Endothelial cell of umbilical vein (primary cell): ENCODE measurements at regions of chr1 and their contacts with region 1.

Region 1: GRCh38 chr1:223123011-223123610 is 19.9 kb downstream of the TLR5 start:
- DNase-seq: peak; percentile 22
- H3K4me3 ChIP-seq: no peak overlapping the region
- H3K27ac ChIP-seq: no peak overlapping the region
- H3K4me1 ChIP-seq: peaks cover 7% of the 10 kb centered on the region
- H3K27me3 ChIP-seq: no peaks in the 10 kb centered on the region
- CTCF ChIP-seq: no peak
- POLR2A ChIP-seq: no peak

Region 2: DNA sequence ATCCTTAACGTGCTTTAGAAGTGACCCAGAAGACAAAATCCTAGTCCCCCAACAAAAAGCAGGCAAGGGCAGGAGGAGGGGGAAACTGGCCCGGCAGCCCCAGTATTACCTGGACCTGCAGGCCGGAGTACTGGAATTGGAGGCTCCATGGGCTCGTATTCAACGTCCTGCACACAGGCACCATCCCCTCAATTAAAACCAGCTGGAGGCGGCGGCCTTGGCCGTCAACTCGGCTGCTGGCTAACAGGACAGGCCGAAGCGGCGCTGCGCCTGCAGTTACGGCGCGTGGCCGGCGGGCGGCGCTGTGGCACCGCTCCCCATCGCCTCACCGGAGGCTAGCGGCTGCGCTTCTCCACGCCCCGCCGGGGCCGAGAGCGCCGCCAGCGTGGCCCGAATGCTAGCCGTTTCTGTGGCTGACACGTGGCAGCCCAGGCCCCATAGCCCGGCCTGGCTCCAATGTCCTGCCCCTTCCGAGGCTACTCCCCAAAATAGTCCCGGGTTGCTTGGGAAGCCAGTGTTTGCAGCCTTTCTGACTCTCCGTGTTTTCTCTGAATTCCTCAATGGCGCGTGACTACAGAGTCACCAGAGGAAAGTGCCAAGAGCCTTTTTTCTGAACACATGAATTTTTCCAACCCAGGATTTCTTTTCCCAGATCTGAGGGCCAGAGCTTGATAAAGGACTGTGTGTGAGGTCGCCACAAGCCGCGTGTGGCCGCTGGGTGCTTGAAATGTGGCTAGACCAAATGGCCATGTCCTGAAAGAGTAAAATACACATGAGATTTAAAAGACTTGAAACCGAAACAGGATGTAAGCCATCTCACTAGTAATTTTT is 657.7 kb before region 1 on chr1:
- CTCF ChIA-PET with region 1: interaction called, 8 read pairs
- POLR2A ChIA-PET with region 1: no interaction called
- dilution Hi-C with region 1: no loop called
- intact Hi-C with region 1: loop called (anchors 5 kb)
- DNase-seq: peak; percentile 97
- H3K4me3 ChIP-seq: peak overlapping the region; percentile 49 to 71 (median 53)
- H3K27ac ChIP-seq: peak overlapping the region; percentile 83
- H3K4me1 ChIP-seq: peaks cover 2% of the 10 kb centered on the region
- H3K27me3 ChIP-seq: peaks cover 6 to 7% of the 10 kb centered on the region in 2 experiments
- CTCF ChIP-seq: peak; percentile 95 to 100
- POLR2A ChIP-seq: peak; percentile 80

Region 3: DNA sequence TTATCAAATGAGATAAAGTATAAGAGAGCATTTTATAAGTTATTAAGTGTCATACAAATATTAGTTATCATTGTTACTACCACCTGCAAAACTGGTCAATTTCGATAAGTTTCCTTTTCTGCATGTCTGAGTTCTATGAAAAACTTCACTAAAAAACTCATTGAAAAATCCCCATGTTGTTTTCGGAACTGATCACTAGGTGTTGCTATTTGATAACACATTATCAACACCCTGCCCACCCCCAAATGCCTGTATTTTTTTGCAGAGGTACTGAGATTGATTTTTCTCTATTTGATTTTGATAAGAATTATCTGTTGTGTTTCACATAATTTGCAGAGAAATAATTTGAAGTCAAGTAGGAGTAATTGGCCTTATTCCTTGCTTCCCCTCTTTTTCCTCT is 330.4 kb before region 1 on chr1:
- CTCF ChIA-PET with region 1: interaction called, 56 read pairs
- POLR2A ChIA-PET with region 1: no interaction called
- dilution Hi-C with region 1: no loop called
- intact Hi-C with region 1: loop called (anchors 1 kb)
- DNase-seq: peak; percentile 44
- H3K4me3 ChIP-seq: no peak overlapping the region
- H3K27ac ChIP-seq: no peak overlapping the region
- H3K4me1 ChIP-seq: peaks cover 10% of the 10 kb centered on the region
- H3K27me3 ChIP-seq: peaks cover 0 to 2% of the 10 kb centered on the region in 2 experiments
- CTCF ChIP-seq: peak; percentile 20 to 29
- POLR2A ChIP-seq: no peak

Region 4: DNA sequence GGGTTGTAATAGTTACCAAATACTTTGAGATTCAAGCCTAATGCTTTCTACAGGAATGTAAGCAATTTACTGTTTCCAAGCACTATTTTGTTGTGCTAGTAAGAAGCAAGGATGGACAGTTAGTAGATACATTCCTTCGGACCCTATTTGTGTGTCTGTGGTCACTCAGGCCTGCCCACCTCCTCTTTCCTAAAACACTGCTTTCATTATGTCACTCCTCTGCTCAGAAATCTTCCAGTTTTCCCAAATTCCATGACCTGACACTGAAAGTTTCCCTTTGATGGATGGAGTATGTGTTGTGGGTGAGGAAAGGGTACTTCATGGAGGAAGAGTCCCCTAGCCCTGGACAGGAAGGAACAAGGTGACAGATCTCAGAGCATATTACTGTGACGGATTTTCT is 167.1 kb before region 1 on chr1:
- CTCF ChIA-PET with region 1: no interaction called
- POLR2A ChIA-PET with region 1: no interaction called
- dilution Hi-C with region 1: no loop called
- intact Hi-C with region 1: no loop called
- DNase-seq: no peak
- H3K4me3 ChIP-seq: no peak overlapping the region
- H3K27ac ChIP-seq: no peak overlapping the region
- H3K4me1 ChIP-seq: no peaks in the 10 kb centered on the region
- H3K27me3 ChIP-seq: no peaks in the 10 kb centered on the region
- CTCF ChIP-seq: no peak
- POLR2A ChIP-seq: no peak

Region 5: DNA sequence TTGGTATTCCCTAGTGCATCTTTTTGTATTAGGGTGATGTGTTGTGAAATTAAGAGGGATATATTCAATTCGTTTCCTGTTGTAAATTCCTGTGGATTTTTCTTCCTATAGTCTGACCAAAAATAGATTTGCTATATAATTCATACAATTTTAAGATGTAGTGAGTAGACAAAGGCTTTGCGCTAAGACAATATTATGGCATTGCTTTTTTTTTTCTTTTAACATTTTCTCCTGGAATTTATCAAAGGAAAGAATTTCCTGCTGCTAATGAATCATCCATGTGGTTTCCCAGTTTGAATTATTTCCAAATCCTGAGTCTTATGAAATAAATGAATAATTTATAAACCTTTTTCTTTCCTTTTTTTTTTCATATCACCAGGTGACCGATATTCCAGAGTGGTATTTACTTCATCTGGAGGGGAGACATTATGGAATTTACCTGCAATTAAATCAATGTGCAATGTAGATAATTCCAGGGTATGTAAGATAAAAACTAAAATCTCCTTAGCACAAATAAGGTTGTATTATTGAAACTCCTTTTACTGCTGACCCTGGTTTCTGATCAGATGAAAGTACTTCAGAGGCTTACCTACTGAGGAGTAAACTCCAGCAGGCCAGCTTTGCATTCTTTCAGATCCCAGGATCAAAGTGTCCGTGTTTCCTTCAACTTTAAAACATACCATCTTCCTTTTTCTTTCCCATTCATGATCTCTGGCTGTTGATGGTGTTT is 128.4 kb before region 1 on chr1:
- CTCF ChIA-PET with region 1: interaction called, 13 read pairs
- POLR2A ChIA-PET with region 1: no interaction called
- dilution Hi-C with region 1: no loop called
- intact Hi-C with region 1: loop called (anchors 5 kb)
- DNase-seq: peak; percentile 79
- H3K4me3 ChIP-seq: peak overlapping the region in 1 of 3 experiments; percentile 52
- H3K27ac ChIP-seq: peak overlapping the region; percentile 81
- H3K4me1 ChIP-seq: peaks cover 36% of the 10 kb centered on the region
- H3K27me3 ChIP-seq: no peaks in the 10 kb centered on the region
- CTCF ChIP-seq: no peak
- POLR2A ChIP-seq: no peak

Region 6: DNA sequence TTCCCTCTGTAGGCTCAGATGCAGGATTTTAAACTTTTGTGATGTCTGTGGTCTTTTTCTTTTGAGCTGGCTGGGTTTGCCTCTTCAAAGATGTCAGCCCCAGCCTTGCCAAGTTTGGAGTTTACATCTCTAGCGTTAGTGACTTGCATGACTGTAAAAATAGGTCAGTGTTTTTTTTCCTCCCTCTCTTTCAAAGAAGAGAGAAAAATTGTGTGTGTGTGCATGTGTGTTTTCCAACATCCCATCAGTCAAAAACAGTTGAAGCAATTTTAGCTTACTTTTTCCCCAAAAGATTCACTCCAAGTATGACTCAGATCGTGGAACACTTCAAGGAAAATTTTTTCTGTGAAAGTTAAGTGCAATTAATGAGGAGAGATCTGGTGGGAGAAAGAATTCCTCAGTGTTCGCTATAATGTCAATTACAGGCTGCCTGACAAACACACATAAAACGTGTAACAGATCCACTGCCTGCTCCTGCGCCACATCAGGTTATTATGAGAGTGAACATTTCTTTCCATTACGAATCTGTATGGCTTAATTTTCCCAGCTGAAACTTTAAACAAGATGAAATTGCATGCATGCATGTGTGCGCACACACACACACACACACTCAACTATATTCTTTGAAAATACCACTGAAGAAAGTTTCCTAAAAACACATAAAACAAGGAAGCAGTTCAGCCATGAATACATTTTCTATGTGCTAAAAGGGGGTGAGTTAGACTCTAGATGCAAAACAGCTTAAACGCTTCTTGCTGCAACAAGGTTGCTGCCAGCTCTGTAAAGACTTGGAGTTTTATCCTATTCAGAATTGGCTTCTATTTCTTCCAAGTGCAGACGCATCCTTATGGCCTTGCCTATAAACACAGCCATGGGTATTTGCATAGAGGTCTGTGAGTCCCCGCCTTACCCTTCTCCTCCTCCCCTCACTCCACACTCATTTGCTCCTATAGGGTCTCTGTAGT is 35.5 kb before region 1 on chr1:
- CTCF ChIA-PET with region 1: interaction called, 351 read pairs
- POLR2A ChIA-PET with region 1: interaction called, 6 read pairs
- dilution Hi-C with region 1: no loop called
- intact Hi-C with region 1: loop called (anchors 1 kb)
- DNase-seq: no peak
- H3K4me3 ChIP-seq: no peak overlapping the region
- H3K27ac ChIP-seq: no peak overlapping the region
- H3K4me1 ChIP-seq: no peaks in the 10 kb centered on the region
- H3K27me3 ChIP-seq: peaks cover 0 to 8% of the 10 kb centered on the region in 2 experiments
- CTCF ChIP-seq: no peak
- POLR2A ChIP-seq: no peak

Region 7: DNA sequence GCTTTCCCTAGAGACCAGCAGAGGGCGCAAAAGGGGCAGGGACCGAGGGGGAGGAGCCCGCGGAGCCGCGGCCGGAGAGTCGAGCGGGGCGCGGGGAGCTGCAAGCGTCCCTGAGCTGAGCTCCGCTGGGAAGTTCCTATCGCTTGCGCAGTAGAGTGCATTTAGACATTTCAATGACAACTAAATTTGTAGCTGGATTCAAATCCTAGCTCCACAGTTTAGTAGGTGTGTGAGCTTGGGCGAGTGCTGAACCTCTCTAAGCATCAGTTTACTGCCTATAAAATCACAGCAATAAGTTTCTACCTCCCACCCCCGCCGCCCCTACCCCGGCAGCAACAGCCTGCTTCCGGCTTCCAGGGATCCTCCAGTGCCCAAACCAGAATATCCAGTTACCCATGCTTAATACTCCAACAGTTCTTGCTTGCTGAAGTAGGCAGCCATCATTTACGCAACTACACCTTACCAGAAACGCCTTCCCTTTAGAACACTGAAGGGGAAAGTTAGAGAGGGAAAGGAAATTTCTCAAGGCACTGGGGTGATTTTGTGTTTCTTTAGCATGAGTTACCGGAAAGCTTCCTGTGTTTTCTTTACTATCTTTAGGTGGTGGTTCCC is 10.8 kb after region 1 on chr1:
- CTCF ChIA-PET with region 1: interaction called, 100 read pairs
- POLR2A ChIA-PET with region 1: no interaction called
- dilution Hi-C with region 1: no loop called
- intact Hi-C with region 1: no loop called
- DNase-seq: peak; percentile 79
- H3K4me3 ChIP-seq: peak overlapping the region in 2 of 3 experiments; percentile 2 to 50
- H3K27ac ChIP-seq: no peak overlapping the region
- H3K4me1 ChIP-seq: peaks cover 8% of the 10 kb centered on the region
- H3K27me3 ChIP-seq: peaks cover 30 to 31% of the 10 kb centered on the region in 2 experiments
- CTCF ChIP-seq: peak; percentile 94 to 98
- POLR2A ChIP-seq: no peak